ENCODE measurements at regions of chr6 and their contacts with region 1.

Region 1: DNA sequence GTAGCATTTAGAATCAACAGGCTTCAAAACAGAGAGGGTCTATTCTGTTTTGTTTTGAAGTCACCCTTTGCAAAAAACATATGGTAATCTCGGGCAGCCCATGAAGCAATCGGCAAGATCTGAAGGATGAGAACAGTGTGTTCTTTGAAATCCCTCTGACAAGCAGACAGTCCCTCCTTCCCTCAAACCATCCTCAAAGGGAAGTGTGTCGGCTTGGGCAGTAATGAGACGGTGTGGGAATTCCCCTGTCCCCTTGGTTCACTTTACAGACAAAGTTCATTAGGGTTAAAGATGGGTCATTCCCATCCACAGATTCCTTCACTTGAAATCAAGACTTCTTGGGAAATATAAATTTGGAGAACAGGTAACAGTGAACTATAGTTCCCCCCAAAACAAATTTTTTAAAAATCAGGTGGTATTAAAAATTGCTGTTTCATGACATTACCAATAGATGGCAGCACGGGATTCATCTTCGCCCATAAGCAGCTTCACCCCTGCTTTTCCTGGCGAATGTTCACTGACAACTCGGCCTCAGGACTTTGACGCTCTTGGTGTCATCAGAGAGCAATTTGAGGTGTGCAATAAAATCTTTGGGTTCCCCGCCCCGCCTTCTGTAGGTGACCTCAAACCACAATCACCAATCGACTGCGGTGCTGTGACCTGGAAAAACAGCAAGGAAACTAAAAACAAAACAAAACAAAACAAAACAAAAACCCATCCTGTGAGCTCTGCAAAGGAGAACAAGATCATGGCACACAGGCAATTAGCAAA is 159.3 kb upstream of the TNFAIP3 start:
- DNase-seq: peak; percentile 84

Region 2: DNA sequence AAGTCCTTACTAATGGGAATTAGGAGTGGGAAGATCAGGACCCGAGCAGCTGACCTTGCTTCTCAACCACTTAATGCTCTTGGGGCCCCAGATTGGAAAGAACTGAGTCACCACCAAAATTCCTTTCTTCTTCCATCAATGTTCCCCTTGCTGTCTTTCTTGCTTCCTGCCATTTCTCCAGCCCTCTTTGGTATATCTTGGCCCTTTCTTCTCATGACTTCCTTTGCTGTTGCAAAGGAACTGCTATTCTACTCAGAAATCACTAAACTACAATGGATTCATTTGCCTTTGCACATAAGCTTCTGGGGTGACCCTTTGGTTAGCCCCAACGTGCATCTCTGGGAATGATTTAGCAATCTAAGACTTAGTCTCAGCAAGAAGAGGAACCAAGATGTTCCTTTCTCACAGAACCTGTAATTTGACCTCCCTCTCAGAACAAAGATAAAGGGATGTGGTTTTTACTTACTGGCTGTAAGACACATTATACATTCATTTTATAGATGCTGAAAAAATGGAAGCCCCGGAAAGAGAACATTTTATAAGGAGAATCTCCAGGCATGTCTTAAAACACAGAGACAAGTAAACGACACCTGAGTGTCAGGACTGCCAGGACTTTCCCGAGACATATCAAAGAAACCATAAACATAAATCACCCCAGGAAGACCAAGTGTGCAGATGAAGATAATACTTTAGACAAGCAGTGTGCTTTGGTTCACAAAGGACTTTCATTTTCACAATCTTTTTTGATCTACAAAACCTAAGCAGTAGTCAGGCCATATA is 60.3 kb after region 1 on chr6:
- intact Hi-C with region 1: no loop called
- DNase-seq: no peak

Region 3: GRCh38 chr6:137866914-137867684 is 159.3 kb after region 1 on chr6 and contains the start of gene TNFAIP3:
- intact Hi-C with region 1: loop called (anchors 10 kb)
- DNase-seq: peak; percentile 98
- total RNA-seq, gene TNFAIP3: 19.0 to 28.6 TPM

Region 4: GRCh38 chr6:137944793-137945498 is 237.2 kb after region 1 on chr6:
- intact Hi-C with region 1: loop called in 1 of 2 experiments (anchors 5 kb)
- DNase-seq: no peak

Measured in posterior vena cava (tissue), 2 donors.